ENCODE measurements at regions of chr9 and their contacts with region 1.

Region 1: GRCh38 chr9:94933429-94933828 is 206.9 kb downstream of the AOPEP start:
- DNase-seq: no peak
- H3K4me3 ChIP-seq: no peak overlapping the region
- H3K4me3 Mint-ChIP-seq: no peak overlapping the region
- H3K27ac Mint-ChIP-seq: peak overlapping the region; percentile 10
- H3K4me1 ChIP-seq: peaks cover 31% of the 10 kb centered on the region
- H3K4me1 Mint-ChIP-seq: peaks cover 34% of the 10 kb centered on the region
- H3K27me3 ChIP-seq: no peaks in the 10 kb centered on the region
- H3K27me3 Mint-ChIP-seq: no peaks in the 10 kb centered on the region
- CTCF ChIP-seq: no peak

Region 2: DNA sequence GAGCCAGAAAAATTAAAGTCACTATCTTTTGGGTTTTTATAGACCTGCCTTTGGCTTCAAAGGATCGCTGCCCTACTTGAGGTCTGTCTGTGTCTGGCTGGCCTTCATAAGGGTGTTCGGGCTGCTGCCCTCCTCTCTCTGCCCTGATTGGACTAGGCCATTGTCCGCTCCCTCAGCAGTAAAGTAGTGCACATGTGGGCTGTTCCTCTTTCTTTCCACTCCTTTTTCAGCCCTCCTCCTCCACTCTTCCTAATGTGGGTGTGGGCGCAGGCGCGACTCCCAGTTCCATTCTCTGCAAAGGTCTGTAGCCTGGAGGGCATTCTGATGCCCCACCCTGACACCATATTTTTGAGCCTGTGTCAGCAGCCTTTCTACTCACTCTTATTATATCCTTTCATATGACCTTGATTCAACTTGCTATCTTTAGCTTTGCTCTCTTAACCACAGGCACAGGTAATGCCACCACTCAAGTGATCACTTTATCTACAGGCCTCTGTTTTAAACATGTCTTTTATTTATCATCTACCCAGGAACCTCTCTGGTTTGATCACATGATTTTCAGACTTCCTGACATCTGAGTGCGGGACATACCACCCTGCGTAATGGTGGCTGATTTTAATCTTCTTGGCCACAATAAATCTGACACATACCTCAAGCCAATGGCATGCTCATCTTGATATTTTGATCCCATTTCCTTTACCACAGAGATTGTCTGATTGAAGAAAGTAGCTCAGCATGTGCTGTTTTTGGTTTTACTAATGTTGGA is 62.5 kb before region 1 on chr9:
- CTCF ChIA-PET with region 1: no interaction called
- POLR2A ChIA-PET with region 1: no interaction called
- intact Hi-C with region 1: no loop called
- DNase-seq: peak; percentile 12 to 67
- H3K4me3 ChIP-seq: no peak overlapping the region
- H3K4me3 Mint-ChIP-seq: no peak overlapping the region
- H3K27ac Mint-ChIP-seq: no peak overlapping the region
- H3K4me1 ChIP-seq: peaks cover 71% of the 10 kb centered on the region
- H3K4me1 Mint-ChIP-seq: peaks cover 52% of the 10 kb centered on the region
- H3K27me3 ChIP-seq: no peaks in the 10 kb centered on the region
- H3K27me3 Mint-ChIP-seq: no peaks in the 10 kb centered on the region
- CTCF ChIP-seq: no peak

Region 3: DNA sequence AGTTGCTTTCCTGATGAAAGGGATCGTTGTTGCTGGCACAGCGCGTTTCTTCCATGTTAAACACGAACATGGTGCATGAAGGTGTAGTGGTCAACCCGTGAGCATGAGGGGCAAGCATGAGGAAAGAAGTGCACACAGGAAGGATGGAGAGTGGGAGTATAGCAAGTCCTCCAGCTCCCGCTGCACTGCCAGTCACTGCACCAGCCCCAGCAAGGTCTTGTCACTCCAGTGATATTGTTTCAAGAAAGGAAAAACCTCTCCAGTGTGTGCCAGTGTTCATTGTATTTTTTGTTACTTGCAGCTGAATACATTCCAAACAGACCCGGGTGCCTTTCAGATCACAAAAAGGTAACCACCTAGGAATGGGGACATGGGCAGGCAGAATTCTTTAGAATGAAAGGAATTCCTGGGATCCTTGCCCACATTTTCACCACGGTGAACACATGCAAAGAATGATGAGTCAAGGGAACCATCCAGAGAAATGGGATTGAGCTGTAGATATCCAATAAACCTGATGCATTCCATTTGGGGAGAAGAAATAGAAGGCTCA is 20.7 kb before region 1 on chr9:
- CTCF ChIA-PET with region 1: no interaction called
- POLR2A ChIA-PET with region 1: no interaction called
- intact Hi-C with region 1: loop called (anchors 2 kb)
- DNase-seq: no peak
- H3K4me3 ChIP-seq: no peak overlapping the region
- H3K4me3 Mint-ChIP-seq: no peak overlapping the region
- H3K27ac Mint-ChIP-seq: peak overlapping the region; percentile 82
- H3K4me1 ChIP-seq: peaks cover 76% of the 10 kb centered on the region
- H3K4me1 Mint-ChIP-seq: peaks cover 47% of the 10 kb centered on the region
- H3K27me3 ChIP-seq: no peaks in the 10 kb centered on the region
- H3K27me3 Mint-ChIP-seq: no peaks in the 10 kb centered on the region
- CTCF ChIP-seq: no peak

Region 4: DNA sequence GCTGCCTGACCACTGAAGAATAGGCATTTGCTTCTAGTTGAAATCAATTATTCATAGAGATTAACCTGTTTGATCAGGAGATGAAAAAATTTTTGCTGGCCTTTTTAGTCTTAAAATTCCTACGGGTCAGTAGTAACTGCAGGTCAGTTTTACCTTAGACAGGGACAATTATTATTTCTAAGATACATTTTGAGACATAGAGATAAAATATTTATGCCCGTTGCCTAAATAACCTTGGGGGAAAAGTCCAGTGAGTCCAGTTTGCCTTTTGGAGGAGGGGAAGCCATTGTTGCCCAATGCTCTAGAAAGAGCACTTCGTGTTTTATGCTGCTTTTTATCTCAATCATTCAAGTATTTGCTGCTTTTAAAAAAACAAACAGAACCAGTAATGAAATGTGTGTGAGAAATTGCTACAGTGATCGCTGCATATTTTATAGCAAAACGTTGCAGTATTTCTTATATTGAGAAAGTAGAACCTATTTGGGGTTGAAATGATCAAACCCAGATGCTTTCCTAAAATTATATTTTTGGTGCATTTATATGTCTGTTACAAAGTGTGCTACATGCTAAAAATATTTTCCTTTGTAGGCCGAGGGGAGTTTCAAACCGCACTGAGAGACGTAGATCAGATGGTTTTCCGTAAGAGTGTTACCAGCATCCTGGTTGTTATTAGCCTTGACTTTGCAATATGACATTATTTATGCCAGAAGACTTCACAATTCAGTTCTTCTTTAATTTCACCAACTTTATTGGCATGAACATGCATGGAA is 59.8 kb after region 1 on chr9:
- CTCF ChIA-PET with region 1: no interaction called
- POLR2A ChIA-PET with region 1: no interaction called
- intact Hi-C with region 1: loop called (anchors 5 kb)
- DNase-seq: no peak
- H3K4me3 ChIP-seq: no peak overlapping the region
- H3K4me3 Mint-ChIP-seq: peak overlapping the region; percentile 8
- H3K27ac Mint-ChIP-seq: peak overlapping the region; percentile 17
- H3K4me1 ChIP-seq: peaks cover 45% of the 10 kb centered on the region
- H3K4me1 Mint-ChIP-seq: peaks cover 25% of the 10 kb centered on the region
- H3K27me3 ChIP-seq: no peaks in the 10 kb centered on the region
- H3K27me3 Mint-ChIP-seq: no peaks in the 10 kb centered on the region
- CTCF ChIP-seq: no peak